ENCODE measurements at regions of chr3 and their contacts with region 1.

Region 1: DNA sequence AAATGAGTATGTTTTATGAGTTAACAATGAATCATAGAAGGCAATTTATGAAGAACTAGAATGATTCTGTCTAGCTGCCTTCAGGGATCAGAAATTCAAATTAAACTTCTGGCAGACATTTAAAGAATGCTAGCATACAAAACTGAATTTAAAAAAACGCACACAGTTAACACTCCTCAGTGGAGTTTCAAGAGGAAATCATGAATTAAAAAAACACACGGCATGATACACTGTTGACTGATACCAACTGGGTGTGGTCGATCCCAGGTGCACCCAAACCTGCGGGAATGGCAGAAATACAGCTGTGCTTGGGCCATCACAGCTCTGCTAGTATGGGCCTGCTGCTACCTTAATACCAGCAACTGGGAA is 526.0 kb downstream of the FOXP1 start:
- DNase-seq: peak; percentile 61
- H3K4me3 ChIP-seq: peak overlapping the region in 1 of 3 experiments; percentile 3
- H3K27ac ChIP-seq: peak overlapping the region; percentile 92
- H3K4me1 ChIP-seq: peaks cover 98% of the 10 kb centered on the region
- H3K27me3 ChIP-seq: no peaks in the 10 kb centered on the region
- CTCF ChIP-seq: no peak
- POLR2A ChIP-seq: no peak

Region 2: GRCh38 chr3:70982700-70983140 is 74.8 kb before region 1 on chr3:
- CTCF ChIA-PET with region 1: no interaction called
- POLR2A ChIA-PET with region 1: no interaction called
- dilution Hi-C with region 1: no loop called
- intact Hi-C with region 1: loop called (anchors 2 kb)
- DNase-seq: peak; percentile 97
- H3K4me3 ChIP-seq: no peak overlapping the region
- H3K27ac ChIP-seq: peak overlapping the region; percentile 92
- H3K4me1 ChIP-seq: peaks cover 46% of the 10 kb centered on the region
- H3K27me3 ChIP-seq: no peaks in the 10 kb centered on the region
- CTCF ChIP-seq: no peak
- POLR2A ChIP-seq: peak; percentile 56

Region 3: GRCh38 chr3:71149959-71150954 is 92.7 kb after region 1 on chr3:
- CTCF ChIA-PET with region 1: no interaction called
- POLR2A ChIA-PET with region 1: no interaction called
- dilution Hi-C with region 1: no loop called
- intact Hi-C with region 1: no loop called
- DNase-seq: no peak
- H3K4me3 ChIP-seq: no peak overlapping the region
- H3K27ac ChIP-seq: no peak overlapping the region
- H3K4me1 ChIP-seq: no peaks in the 10 kb centered on the region
- H3K27me3 ChIP-seq: no peaks in the 10 kb centered on the region
- CTCF ChIP-seq: no peak
- POLR2A ChIP-seq: no peak

Region 4: GRCh38 chr3:71288269-71288930 is 230.9 kb after region 1 on chr3:
- CTCF ChIA-PET with region 1: no interaction called
- POLR2A ChIA-PET with region 1: no interaction called
- dilution Hi-C with region 1: no loop called
- intact Hi-C with region 1: no loop called
- DNase-seq: no peak
- H3K4me3 ChIP-seq: no peak overlapping the region
- H3K27ac ChIP-seq: no peak overlapping the region
- H3K4me1 ChIP-seq: peaks cover 5% of the 10 kb centered on the region
- H3K27me3 ChIP-seq: no peaks in the 10 kb centered on the region
- CTCF ChIP-seq: no peak
- POLR2A ChIP-seq: no peak

Measured in endothelial cell of umbilical vein (primary cell).